Activated T-helper 2 cell treated with anti-CD3 and anti-CD28 coated beads, Interferon-gamma antibody, Interleukin-2, Interleukin-4, amounts not matched to agents 10 μg/mL and 5 μg/mL and 100 μg/mL, durations not matched to agents 14 hours and 24 hours and 36 hours (primary cell): ENCODE measurements at regions of chr18 and their contacts with region 1.

Region 1: GRCh38 chr18:47204908-47205522 is 28.9 kb upstream of the IER3IP1 start:
- DNase-seq: no peak
- H3K4me3 Mint-ChIP-seq: no peak overlapping the region
- H3K27ac Mint-ChIP-seq: no peak overlapping the region
- H3K4me1 Mint-ChIP-seq: no peaks in the 10 kb centered on the region
- H3K27me3 Mint-ChIP-seq: peaks cover 36% of the 10 kb centered on the region

Region 2: DNA sequence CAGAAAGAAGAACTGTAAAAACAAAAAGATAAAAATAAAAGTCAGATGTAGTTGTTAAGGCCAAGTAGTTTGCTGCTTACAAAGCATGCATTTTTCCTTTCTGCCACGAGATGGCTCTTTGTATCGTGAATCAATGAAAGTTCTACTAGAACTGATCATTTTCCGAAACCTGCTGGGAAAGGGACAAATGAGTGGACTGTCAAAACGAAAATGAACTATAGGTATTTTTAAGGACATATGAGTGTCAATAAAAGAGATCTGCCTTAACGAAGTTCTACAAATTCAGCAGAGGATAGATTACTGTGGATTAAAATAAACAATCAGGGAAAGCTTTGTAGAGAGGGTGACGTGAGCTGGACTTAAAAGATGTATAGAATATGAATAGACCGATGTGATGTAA is 154.5 kb before region 1 on chr18:
- intact Hi-C with region 1: loop called (anchors 5 kb)
- DNase-seq: no peak
- H3K4me3 Mint-ChIP-seq: no peak overlapping the region
- H3K27ac Mint-ChIP-seq: no peak overlapping the region
- H3K4me1 Mint-ChIP-seq: no peaks in the 10 kb centered on the region
- H3K27me3 Mint-ChIP-seq: peaks cover 6% of the 10 kb centered on the region

Region 3: DNA sequence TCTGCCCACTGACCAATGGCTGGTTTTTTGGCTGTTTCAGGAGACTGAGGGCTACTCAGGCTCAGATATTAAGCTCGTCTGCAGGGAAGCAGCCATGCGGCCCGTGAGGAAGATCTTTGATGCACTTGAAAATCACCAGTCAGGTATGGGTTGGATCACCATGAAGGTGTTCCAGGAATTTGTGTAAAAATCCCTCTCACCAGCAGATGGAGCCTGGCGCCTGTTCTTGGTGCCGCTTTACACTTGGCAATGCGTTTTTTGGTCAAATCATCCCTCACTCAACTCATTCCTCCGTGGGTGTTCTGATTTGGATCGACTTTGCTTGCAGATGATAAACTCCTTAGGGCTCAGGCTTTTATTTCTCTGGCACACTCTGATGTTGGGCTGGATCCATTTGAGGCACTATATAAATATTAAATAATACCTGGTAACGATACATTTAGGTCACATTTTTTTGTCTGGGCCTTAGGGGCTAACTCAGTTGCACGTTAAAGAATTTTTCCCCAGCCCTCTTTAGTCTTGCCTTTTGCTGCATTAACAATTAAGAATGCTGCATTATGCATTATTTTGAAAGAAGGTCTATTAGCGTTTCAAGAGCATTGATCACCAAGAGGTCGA is 104.7 kb before region 1 on chr18:
- intact Hi-C with region 1: loop called (anchors 1 kb)
- DNase-seq: peak; percentile 34
- H3K4me3 Mint-ChIP-seq: no peak overlapping the region
- H3K27ac Mint-ChIP-seq: no peak overlapping the region
- H3K4me1 Mint-ChIP-seq: no peaks in the 10 kb centered on the region
- H3K27me3 Mint-ChIP-seq: no peaks in the 10 kb centered on the region

Region 4: DNA sequence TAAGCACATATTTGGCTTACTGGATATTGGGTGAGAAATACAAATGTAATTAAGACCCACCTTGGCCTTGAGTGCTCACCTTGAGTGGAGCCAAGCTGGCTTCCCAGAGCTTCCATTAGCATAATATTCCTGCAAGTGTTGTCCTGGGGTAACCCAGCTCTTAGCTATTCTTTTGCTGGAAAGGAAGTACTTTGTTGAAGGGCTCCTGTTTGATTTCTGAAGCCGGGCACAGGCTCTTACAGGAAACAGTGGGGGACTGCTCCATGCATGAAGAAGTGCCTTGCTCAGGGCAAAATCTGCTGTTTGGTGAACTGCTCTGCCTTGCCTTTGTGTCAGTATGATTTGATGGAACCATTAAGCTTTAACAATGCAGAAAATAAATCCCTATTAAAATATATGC is 400.1 kb after region 1 on chr18:
- intact Hi-C with region 1: no loop called
- DNase-seq: no peak
- H3K4me3 Mint-ChIP-seq: no peak overlapping the region
- H3K27ac Mint-ChIP-seq: no peak overlapping the region
- H3K4me1 Mint-ChIP-seq: no peaks in the 10 kb centered on the region
- H3K27me3 Mint-ChIP-seq: no peaks in the 10 kb centered on the region

Region 5: GRCh38 chr18:47846431-47846830 is 641.4 kb after region 1 on chr18:
- intact Hi-C with region 1: no loop called
- DNase-seq: no peak
- H3K4me3 Mint-ChIP-seq: no peak overlapping the region
- H3K27ac Mint-ChIP-seq: no peak overlapping the region
- H3K4me1 Mint-ChIP-seq: no peaks in the 10 kb centered on the region
- H3K27me3 Mint-ChIP-seq: no peaks in the 10 kb centered on the region